ENCODE measurements at regions of chr1 and their contacts with region 1.

Region 1: GRCh38 chr1:183915625-183916510 is 110.9 kb downstream of the RGL1 start:
- DNase-seq: peak; percentile 82

Region 2: GRCh38 chr1:183655562-183656075 is 260.2 kb before region 1 on chr1:
- CTCF ChIA-PET with region 1: interaction called, 36 read pairs
- POLR2A ChIA-PET with region 1: interaction called, 3 read pairs
- DNase-seq: peak; percentile 83

Region 3: GRCh38 chr1:183926983-183927382 is 11.1 kb after region 1 on chr1:
- CTCF ChIA-PET with region 1: interaction called, 13 read pairs
- POLR2A ChIA-PET with region 1: no interaction called
- DNase-seq: no peak

Region 4: GRCh38 chr1:183956559-183957188 is 40.8 kb after region 1 on chr1:
- CTCF ChIA-PET with region 1: no interaction called
- POLR2A ChIA-PET with region 1: no interaction called
- DNase-seq: no peak

Region 5: DNA sequence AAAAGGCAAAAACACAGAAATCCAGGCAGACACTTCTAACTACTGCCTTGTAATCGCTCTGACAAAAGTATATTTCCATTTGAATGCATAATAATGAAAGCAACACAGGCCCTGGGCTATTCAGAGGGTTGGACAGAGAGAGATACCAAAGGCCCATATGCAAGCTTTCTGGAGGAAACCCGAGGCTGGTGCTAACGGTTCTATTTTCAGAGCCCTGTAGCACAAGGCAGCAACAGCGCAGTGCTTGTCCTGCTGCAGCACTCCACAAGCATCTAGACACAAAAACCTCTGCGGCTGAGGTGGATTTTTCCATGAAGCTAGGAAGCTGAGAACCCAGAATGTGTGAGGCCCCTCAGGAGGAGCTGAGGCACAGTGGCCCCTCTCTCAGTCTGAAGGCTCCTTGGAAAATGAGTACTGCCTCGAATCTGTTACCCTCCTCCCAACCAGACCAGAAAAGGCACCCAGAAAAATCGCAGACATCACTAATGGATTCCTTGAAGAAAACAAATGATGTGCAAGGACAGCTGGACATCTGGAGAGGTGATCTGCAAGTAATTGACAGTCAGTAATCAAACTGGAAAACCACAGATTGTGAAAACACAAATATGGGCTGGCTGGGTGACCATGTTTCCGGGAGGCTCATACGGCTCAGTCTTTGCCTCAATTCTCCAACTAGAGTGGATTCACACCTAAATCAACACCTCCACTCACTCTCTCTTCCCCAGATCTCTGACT is 67.7 kb after region 1 on chr1:
- CTCF ChIA-PET with region 1: no interaction called
- POLR2A ChIA-PET with region 1: no interaction called
- DNase-seq: no peak